ENCODE measurements at regions of chr18 and their contacts with region 1.

Region 1: DNA sequence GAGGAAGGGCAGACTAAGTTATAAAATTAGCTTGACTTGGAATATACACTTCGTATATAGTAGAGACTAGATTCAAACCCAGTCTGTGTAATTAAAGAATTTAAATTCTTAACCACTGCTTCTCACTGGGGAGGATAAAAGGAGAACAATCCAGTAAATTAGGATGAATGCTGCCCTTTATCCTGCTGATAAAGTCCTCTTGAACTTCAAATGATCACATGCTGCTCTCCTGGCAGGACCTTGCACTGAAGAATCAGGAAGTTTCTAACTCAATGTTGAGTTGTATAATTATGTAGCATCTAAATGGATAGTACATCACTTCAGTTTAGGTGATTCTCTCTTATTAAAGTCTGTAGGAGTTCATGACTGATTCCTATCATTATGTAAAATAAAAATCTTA is 1179.7 kb downstream of the DSC3 start:
- DNase-seq: no peak
- ATAC-seq: no peak
- H3K4me3 ChIP-seq: no peak overlapping the region
- H3K27ac ChIP-seq: no peak overlapping the region
- H3K4me1 ChIP-seq: no peaks in the 10 kb centered on the region
- H3K27me3 ChIP-seq: no peaks in the 10 kb centered on the region
- CTCF ChIP-seq: no peak
- POLR2A ChIP-seq: no peak

Region 2: GRCh38 chr18:29928081-29928480 is 65.3 kb after region 1 on chr18:
- in situ Hi-C with region 1: loop called in 1 of 4 experiments (anchors 10 kb)
- intact Hi-C with region 1: no loop called
- DNase-seq: no peak
- ATAC-seq: no peak
- H3K4me3 ChIP-seq: no peak overlapping the region
- H3K27ac ChIP-seq: no peak overlapping the region
- H3K4me1 ChIP-seq: no peaks in the 10 kb centered on the region
- H3K27me3 ChIP-seq: no peaks in the 10 kb centered on the region
- CTCF ChIP-seq: no peak
- POLR2A ChIP-seq: no peak